ENCODE measurements at regions of chr1 and their contacts with region 1.

Region 1: GRCh38 chr1:169106095-169106920 is at the start of gene ATP1B1:
- DNase-seq: peak; percentile 87
- H3K4me3 ChIP-seq: peak within 1 kb of the TSS; percentile 89 to 99 (median 94)
- H3K27ac ChIP-seq: peak within 1 kb of the TSS; percentile 89
- H3K4me1 ChIP-seq: peaks cover 35% of the 10 kb centered on the region
- H3K27me3 ChIP-seq: no peaks in the 10 kb centered on the region
- CTCF ChIP-seq: peak in 1 of 2 donors; percentile 44
- POLR2A ChIP-seq: peak; percentile 90
- total RNA-seq, gene ATP1B1: 56.1 and 60.5 TPM in 2 replicates

Region 2: DNA sequence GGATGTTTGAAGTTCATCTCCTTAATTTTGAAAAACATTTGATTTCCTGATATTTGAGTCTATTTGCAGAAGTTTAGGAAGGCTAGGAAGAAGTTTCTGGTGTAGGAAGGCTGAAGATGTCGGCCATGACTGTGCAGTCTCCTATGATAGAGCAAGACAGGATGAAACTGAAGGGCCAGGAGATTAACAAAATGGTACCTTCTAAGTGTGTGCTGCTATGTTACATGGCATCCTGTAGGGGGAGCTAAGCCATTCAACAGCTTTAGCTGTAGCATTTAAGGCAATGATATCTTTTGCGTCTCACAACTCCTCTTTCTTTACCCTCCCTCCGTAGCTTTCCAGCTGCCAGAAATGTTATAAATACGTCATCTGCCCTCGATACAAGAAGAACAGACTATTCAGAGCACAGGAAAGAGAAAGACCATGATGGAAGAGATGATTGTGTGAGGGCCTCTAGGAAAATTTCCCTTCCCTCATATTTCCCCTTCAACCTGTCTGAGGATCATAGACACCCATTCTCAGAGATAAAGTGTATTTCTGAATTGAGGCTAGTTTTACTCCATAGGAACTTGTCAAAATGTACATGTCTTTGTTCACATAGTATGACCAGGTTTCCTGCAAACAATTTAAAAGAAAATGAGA is 468.8 kb before region 1 on chr1:
- CTCF ChIA-PET with region 1: interaction called, 9 read pairs
- POLR2A ChIA-PET with region 1: no interaction called
- dilution Hi-C with region 1: no loop called
- intact Hi-C with region 1: loop called (anchors 5 kb)
- DNase-seq: peak; percentile 28
- H3K4me3 ChIP-seq: no peak overlapping the region
- H3K27ac ChIP-seq: no peak overlapping the region
- H3K4me1 ChIP-seq: no peaks in the 10 kb centered on the region
- H3K27me3 ChIP-seq: no peaks in the 10 kb centered on the region
- CTCF ChIP-seq: peak; percentile 67 to 74
- POLR2A ChIP-seq: no peak

Region 3: GRCh38 chr1:169250022-169250421 is 143.7 kb after region 1 on chr1:
- CTCF ChIA-PET with region 1: no interaction called
- POLR2A ChIA-PET with region 1: no interaction called
- dilution Hi-C with region 1: no loop called
- intact Hi-C with region 1: loop called (anchors 1 kb)
- DNase-seq: peak; percentile 53
- H3K4me3 ChIP-seq: peak overlapping the region in 1 of 3 experiments; percentile 23
- H3K27ac ChIP-seq: no peak overlapping the region
- H3K4me1 ChIP-seq: peaks cover 6% of the 10 kb centered on the region
- H3K27me3 ChIP-seq: no peaks in the 10 kb centered on the region
- CTCF ChIP-seq: no peak
- POLR2A ChIP-seq: no peak

Region 4: DNA sequence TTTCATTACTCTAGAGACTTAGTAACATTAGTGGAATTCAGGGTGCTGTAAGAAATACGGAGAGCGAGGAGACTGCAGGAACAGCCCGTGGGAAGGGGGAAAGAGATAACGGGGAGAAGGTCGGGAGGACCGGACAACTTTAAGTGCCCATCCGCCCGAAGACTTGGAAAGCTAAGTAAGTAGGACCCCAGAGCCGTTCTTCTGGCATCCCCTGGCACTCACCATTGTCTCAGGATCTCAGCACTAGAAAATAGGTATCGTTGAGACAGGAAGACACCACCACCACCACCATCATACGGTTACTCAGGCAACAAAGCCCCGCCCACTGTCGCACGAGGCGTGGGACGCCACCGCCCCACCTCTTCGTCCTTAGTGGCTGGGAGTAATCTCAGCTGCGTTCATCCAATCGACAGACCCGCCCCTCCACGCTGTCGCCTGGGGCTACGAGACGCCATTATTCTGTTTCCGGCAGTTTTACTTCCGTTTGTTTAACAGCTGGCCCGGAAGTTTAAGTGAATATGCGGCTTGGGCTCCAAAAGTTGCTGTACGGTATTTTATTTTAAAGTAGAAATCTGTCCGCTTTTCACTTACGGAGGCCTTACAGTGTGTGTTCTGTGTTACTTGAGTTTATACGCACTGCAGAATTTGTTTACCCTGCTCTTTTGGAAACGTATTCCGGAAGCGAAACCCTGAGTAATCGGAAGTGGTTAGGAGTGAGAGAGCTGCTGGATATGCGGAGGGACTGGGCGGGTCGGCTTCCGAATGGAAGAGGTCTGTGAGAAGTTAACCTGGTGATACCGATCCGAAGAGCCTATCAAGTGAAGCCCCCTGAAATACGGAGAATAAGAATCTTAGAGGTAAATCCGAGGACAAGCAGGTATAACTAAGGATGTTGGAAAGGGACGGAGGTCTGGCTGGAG is 261.4 kb after region 1 on chr1 and contains the starts of genes BLZF1 and NME7:
- CTCF ChIA-PET with region 1: no interaction called
- POLR2A ChIA-PET with region 1: interaction called, 4 read pairs
- dilution Hi-C with region 1: no loop called
- intact Hi-C with region 1: loop called (anchors 1 kb)
- DNase-seq: peak; percentile 98
- H3K4me3 ChIP-seq: peak within 1 kb of the TSS; percentile 97 to 100 (median 98)
- H3K27ac ChIP-seq: peak within 1 kb of the TSS; percentile 96
- H3K4me1 ChIP-seq: peaks cover 19% of the 10 kb centered on the region
- H3K27me3 ChIP-seq: no peaks in the 10 kb centered on the region
- CTCF ChIP-seq: no peak
- POLR2A ChIP-seq: peak; percentile 84
- total RNA-seq, gene BLZF1: 19.7 and 21.2 TPM in 2 replicates
- total RNA-seq, gene NME7: 25.0 and 25.3 TPM in 2 replicates

Region 5: DNA sequence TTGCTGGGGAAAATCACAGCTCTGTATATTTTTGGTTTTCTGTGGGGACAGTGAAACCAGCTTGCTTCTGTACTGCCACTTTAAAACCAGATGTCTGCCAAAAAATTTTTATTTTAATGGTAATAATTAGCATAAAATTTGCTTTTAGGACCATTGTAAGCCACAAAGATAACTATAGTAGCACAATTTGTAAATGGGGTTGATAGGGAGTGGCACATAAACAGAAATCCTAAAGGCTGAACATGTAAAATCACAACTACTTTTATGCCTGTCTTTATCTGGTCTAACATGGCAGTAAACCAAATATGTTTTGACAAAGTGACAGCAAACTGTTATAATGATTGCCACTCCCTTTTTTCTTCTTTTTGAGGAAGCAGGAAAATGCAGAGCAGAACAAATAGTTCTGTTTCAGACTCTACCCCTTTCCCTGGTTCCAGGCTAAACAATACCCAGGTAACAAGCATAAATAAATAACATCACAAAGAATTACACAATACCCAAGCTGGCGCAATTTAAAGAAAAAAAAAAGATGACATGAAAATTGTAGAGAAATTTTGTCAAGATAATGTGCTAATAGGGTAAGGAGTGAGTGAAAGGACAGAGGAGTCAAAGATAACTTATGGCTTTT is 345.0 kb after region 1 on chr1:
- CTCF ChIA-PET with region 1: no interaction called
- POLR2A ChIA-PET with region 1: no interaction called
- dilution Hi-C with region 1: no loop called
- intact Hi-C with region 1: no loop called
- DNase-seq: no peak
- H3K4me3 ChIP-seq: no peak overlapping the region
- H3K27ac ChIP-seq: no peak overlapping the region
- H3K4me1 ChIP-seq: no peaks in the 10 kb centered on the region
- H3K27me3 ChIP-seq: no peaks in the 10 kb centered on the region
- CTCF ChIP-seq: no peak
- POLR2A ChIP-seq: no peak

Region 6: GRCh38 chr1:169893494-169894362 is 787.4 kb after region 1 on chr1 and contains the start of gene SCYL3:
- CTCF ChIA-PET with region 1: no interaction called
- POLR2A ChIA-PET with region 1: no interaction called
- dilution Hi-C with region 1: no loop called
- intact Hi-C with region 1: loop called (anchors 5 kb)
- DNase-seq: peak; percentile 98
- H3K4me3 ChIP-seq: peak within 1 kb of the TSS; percentile 74 to 94 (median 93)
- H3K27ac ChIP-seq: peak within 1 kb of the TSS; percentile 100
- H3K4me1 ChIP-seq: peaks cover 16% of the 10 kb centered on the region
- H3K27me3 ChIP-seq: peaks cover 11 to 19% of the 10 kb centered on the region in 2 experiments
- CTCF ChIP-seq: no peak
- POLR2A ChIP-seq: peak; percentile 68
- total RNA-seq, gene SCYL3: 5.6 and 6.2 TPM in 2 replicates